AG04449 (cell line): ENCODE measurements at regions of chr1 and their contacts with region 1.

Region 1: DNA sequence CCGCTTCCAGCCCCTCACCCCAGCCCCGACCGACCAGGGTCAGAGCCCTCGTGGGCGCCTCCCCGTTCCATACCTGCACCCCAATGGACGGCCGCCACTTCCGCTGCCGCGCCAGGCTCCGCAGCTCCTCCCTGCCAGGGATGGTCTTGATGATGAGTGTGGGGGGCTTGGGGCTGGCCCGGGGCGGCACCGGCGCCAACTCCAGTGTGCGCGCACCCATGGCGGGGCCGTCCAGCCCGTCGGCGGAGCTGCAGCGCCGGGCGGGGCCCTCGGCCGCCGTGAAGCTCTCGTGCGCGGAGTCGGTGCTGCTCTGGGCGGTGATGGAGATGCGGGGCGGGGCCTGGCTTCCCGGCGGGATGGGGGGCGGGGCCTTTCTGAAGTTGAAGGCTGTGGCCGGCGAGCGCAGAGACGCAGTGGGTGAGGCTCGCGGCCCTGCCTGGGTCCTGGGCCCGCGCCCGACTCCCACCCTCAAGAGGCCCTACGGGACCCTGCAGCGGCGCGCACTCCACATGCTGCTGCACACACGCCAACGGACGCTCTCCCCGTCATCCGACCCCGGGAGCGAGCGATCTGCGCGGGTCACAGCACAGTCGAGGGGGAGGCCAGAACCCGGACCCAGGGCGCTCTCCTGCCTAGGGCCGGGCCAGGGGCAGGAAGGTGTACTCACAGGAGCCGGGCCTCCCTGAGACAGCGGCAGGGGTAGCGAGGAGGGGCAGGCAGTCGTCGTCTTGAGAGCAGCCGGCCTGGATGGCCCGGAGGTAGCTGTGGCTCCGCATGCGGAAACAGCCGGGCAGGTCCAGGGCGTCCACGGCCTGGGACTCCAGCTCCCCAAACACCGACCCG is 26.1 kb upstream of the SMIM12 start:
- DNase-seq: no peak
- H3K4me3 ChIP-seq: peak overlapping the region; percentile 50
- CTCF ChIP-seq: no peak

Region 2: GRCh38 chr1:34859446-34860200 is 26.0 kb before region 1 on chr1 and contains the start of gene SMIM12:
- CTCF ChIA-PET with region 1: interaction called, 30 read pairs
- POLR2A ChIA-PET with region 1: no interaction called
- DNase-seq: peak; percentile 53
- H3K4me3 ChIP-seq: peak within 1 kb of the TSS; percentile 99
- CTCF ChIP-seq: peak; percentile 91